Right ventricle myocardium inferior (tissue), 1 donor: ENCODE measurements at regions of chr14 and their contacts with region 1.

Region 1: DNA sequence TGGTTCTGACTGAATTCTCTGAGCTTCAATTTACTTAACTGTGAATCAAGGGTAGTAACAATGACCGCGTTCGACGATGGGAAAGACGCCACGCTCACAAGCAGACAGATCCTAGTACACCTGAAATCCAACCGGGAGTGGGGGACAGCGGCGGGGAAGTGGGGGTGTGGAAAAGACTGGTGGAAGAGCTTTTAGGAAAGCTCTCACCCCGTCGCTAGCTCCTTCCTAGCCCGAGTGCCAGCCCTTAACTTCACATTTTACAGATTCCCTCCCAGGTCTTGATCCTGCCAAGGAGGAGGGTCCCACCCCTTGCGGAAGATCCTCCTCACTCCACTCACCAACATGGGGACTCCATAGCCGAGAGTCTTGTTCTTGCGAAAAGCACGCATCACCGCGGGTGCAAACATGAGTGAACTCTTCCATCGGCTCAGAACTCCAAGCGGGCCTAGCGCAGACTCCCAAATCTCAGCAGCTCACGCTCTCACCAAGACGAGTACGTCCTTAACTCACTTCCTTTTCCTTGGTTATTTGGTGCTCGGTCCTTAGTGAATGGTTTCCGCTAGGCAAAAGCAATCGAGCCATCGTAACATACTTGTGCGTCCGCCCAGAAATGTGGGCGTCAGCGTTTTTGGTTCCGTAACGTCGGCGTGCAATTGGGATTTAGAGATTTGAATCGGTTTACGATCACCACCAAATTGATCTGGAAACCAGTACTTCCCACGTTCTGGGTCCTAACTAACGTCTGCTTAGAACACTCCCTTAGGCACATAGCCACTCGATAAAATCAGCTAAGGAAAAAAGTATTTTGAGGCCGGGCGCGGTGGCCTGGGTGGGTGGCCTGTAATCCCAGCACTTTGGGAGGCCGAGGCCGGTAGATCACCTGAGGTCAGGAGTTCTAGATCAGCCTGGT is at the start of gene COX16:
- DNase-seq: peak; percentile 86
- ATAC-seq: peak; percentile 99
- total RNA-seq, gene COX16: 40.3 TPM

Region 2: GRCh38 chr14:70096866-70097265 is 262.6 kb before region 1 on chr14:
- intact Hi-C with region 1: no loop called
- DNase-seq: no peak
- ATAC-seq: no peak

Region 3: GRCh38 chr14:70416725-70417349 is 57.4 kb after region 1 on chr14 and contains the start of gene SYNJ2BP:
- intact Hi-C with region 1: loop called (anchors 10 kb)
- DNase-seq: peak; percentile 75
- ATAC-seq: peak; percentile 93
- total RNA-seq, gene SYNJ2BP: 55.9 TPM

Region 4: GRCh38 chr14:70489579-70490175 is 130.2 kb after region 1 on chr14:
- intact Hi-C with region 1: no loop called
- DNase-seq: no peak
- ATAC-seq: no peak